IMR-90 (cell line): ENCODE measurements at regions of chr1 and their contacts with region 1.

Region 1: GRCh38 chr1:153922972-153923925 is at the start of gene GATAD2B:
- DNase-seq: peak; percentile 100
- ATAC-seq: peak; percentile 98
- H3K4me3 ChIP-seq: peak within 1 kb of the TSS; percentile 89
- H3K27ac ChIP-seq: peak within 1 kb of the TSS; percentile 83
- H3K4me1 ChIP-seq: peaks cover 11% of the 10 kb centered on the region
- H3K27me3 ChIP-seq: no peaks in the 10 kb centered on the region
- CTCF ChIP-seq: no peak
- POLR2A ChIP-seq: peak; percentile 53
- RAD21 ChIP-seq: no peak
- total RNA-seq, gene GATAD2B: 3.8 and 5.6 TPM in 2 replicates

Region 2: DNA sequence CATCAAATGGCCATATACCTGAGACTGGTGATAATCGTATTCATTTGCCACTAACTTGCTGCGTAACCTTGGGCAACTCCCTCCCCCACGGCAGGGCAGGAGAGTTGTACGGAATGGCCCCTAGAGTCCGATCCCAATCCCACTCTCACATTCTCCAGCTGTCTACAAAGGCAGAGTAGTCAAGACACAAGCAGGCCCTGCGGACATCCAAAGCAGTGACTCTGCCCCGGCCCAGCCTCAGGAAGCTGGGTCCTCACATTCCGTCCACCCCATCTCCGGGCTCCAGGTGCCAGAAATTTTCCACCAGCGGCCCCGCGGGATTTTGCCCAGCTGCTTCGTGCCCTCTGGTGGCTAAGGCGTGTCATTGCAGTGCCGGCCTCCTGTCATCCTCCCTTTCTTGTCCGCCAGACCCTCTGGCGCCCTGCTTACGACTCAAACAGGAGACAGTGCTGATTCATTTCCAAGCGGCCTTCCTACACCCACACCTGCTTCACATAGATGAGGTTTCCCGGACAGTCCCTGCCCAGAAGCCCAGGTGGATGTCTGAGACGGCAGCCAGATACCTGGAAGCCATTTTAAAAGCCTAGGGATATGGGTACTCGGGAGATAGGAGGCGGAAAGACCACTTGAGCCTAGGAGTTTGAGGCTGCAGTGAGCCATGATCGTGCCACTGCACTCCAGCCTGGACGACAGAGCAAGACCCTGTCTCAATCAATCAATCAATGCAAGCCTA is 354.7 kb before region 1 on chr1:
- CTCF ChIA-PET with region 1: no interaction called
- POLR2A ChIA-PET with region 1: no interaction called
- dilution Hi-C with region 1: no loop called
- in situ Hi-C with region 1: no loop called
- intact Hi-C with region 1: no loop called
- DNase-seq: peak; percentile 84
- ATAC-seq: peak; percentile 44
- H3K4me3 ChIP-seq: no peak overlapping the region
- H3K27ac ChIP-seq: peak overlapping the region; percentile 94
- H3K4me1 ChIP-seq: peaks cover 35% of the 10 kb centered on the region
- H3K27me3 ChIP-seq: no peaks in the 10 kb centered on the region
- CTCF ChIP-seq: peak; percentile 98
- POLR2A ChIP-seq: peak; percentile 68
- RAD21 ChIP-seq: peak; percentile 99

Region 3: DNA sequence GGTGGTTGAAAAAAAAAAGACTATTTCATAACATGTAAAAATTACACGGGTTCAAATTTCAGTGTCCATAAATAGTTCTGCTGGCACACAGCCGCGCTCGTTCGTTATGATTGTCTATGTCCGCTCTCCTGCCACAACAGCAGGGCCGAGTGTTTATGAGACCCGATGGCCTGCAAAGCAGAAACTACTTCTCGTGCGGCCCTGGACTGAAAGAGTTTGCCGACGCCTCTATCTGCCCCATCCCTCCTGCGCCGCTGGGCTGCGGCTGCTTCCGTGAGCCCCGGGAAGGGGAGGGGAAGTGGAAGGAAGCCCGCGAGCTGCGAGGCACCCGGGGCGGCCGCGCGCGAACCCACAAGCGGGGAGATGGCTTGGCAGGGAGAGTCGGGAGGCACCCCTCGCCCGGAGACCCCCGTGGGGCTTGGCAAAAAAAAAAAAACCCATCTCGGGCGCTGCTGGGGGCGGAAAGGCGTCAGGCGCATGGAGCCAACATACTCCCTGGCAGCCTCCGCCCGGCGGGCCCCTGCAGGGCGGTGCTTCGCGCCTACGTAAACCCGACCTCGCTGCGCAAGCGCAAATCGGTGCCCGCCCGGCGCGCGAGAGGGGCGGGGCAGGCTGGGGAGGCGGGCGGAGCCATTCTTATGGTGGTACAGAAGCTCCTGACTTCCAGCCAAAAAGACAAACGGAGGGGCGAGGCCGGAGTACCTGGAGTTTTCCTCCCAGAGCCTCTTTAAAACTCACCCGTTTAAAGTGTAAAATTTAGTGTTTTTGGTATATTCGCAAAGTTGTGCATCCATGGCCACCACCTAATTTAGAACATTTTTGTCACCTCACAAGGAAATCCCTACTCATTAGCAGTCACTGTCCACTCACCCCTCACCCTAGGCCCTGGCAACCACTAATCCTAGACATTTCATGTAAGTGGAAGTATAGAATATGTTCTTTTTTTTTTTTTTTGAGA is 139.7 kb before region 1 on chr1:
- CTCF ChIA-PET with region 1: no interaction called
- POLR2A ChIA-PET with region 1: interaction called, 14 read pairs
- dilution Hi-C with region 1: no loop called
- in situ Hi-C with region 1: no loop called
- intact Hi-C with region 1: no loop called
- DNase-seq: peak; percentile 86
- ATAC-seq: peak; percentile 99
- H3K4me3 ChIP-seq: peak overlapping the region; percentile 61
- H3K27ac ChIP-seq: peak overlapping the region; percentile 95
- H3K4me1 ChIP-seq: 0 out of 2 replicates have a peak, but pooled peaks cover 5% of the 10 kb centered on the region
- H3K27me3 ChIP-seq: no peaks in the 10 kb centered on the region
- CTCF ChIP-seq: no peak
- POLR2A ChIP-seq: peak; percentile 93
- RAD21 ChIP-seq: 0 out of 2 replicates have a peak, but pooled peaks have one; percentile 9

Region 4: GRCh38 chr1:153796791-153797659 is 126.2 kb before region 1 on chr1:
- CTCF ChIA-PET with region 1: no interaction called
- POLR2A ChIA-PET with region 1: no interaction called
- dilution Hi-C with region 1: loop called (anchors 25 kb)
- in situ Hi-C with region 1: no loop called
- intact Hi-C with region 1: loop called (anchors 10 kb)
- DNase-seq: peak; percentile 61
- ATAC-seq: peak; percentile 76
- H3K4me3 ChIP-seq: no peak overlapping the region
- H3K27ac ChIP-seq: no peak overlapping the region
- H3K4me1 ChIP-seq: no peaks in the 10 kb centered on the region
- H3K27me3 ChIP-seq: no peaks in the 10 kb centered on the region
- CTCF ChIP-seq: peak; percentile 79
- POLR2A ChIP-seq: no peak
- RAD21 ChIP-seq: peak; percentile 75

Region 5: DNA sequence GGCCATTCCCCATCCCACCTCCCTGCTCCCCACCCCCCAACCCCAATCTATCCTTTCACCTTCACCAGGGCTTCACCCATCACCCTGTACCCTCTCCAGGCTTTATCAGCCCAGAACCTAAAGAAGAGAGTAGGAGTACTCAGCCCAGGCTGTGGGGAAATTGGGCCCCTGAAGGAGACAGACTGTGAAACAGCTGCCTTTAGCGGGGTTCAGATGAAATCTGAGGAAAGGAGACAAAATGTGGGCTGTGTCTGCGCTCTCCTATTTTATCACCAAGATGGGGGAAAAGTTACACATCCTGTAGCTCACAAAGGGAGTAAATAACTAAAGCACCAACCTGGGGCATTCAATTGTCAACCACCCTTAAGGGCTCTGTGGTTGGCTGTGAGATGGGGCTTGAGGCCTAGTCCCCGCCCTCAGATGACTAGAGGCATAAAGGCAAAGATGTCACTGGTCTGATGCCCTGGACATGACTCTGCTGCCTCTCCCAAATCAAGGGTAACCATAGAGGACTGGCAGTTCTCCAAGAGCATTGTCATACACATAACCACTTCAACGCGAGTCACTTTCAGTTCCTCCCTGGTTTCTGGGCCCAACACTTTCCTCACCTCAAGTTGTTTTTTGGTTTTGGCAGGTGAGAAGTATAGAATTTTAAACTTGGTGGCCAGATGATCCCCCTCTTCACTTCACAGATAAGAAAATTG is 118.1 kb before region 1 on chr1:
- CTCF ChIA-PET with region 1: no interaction called
- POLR2A ChIA-PET with region 1: no interaction called
- dilution Hi-C with region 1: loop called (anchors 25 kb)
- in situ Hi-C with region 1: no loop called
- intact Hi-C with region 1: no loop called
- DNase-seq: peak; percentile 92
- ATAC-seq: peak; percentile 82
- H3K4me3 ChIP-seq: no peak overlapping the region
- H3K27ac ChIP-seq: no peak overlapping the region
- H3K4me1 ChIP-seq: 0 out of 2 replicates have a peak, but pooled peaks cover 3% of the 10 kb centered on the region
- H3K27me3 ChIP-seq: no peaks in the 10 kb centered on the region
- CTCF ChIP-seq: no peak
- POLR2A ChIP-seq: no peak
- RAD21 ChIP-seq: no peak

Region 6: GRCh38 chr1:153816283-153816889 is 106.9 kb before region 1 on chr1:
- CTCF ChIA-PET with region 1: no interaction called
- POLR2A ChIA-PET with region 1: no interaction called
- dilution Hi-C with region 1: loop called (anchors 25 kb)
- in situ Hi-C with region 1: no loop called
- intact Hi-C with region 1: loop called (anchors 2 kb)
- DNase-seq: no peak
- ATAC-seq: no peak
- H3K4me3 ChIP-seq: no peak overlapping the region
- H3K27ac ChIP-seq: no peak overlapping the region
- H3K4me1 ChIP-seq: no peaks in the 10 kb centered on the region
- H3K27me3 ChIP-seq: no peaks in the 10 kb centered on the region
- CTCF ChIP-seq: no peak
- POLR2A ChIP-seq: no peak
- RAD21 ChIP-seq: no peak

Region 7: DNA sequence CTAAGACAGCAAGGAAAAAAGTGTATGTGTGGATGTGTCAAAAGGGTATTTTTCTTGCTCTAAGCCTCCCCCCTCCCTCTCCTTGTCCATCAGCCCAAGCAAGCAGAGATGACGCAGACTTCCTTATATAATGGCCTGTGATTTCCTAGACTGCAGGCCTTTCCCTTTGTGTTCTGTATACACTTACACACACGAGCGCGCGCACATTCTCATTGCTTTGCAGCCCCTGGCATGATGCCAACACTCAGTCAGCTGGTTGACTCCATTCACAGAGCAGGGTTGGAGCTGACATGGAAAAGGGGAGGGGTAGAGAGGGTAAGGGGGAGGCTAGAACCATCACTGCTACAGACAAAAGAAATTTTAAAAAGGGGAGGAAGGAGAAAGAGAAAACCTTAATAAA is 42.3 kb before region 1 on chr1:
- CTCF ChIA-PET with region 1: no interaction called
- POLR2A ChIA-PET with region 1: no interaction called
- dilution Hi-C with region 1: no loop called
- in situ Hi-C with region 1: no loop called
- intact Hi-C with region 1: loop called (anchors 5 kb)
- DNase-seq: peak; percentile 98
- ATAC-seq: peak; percentile 97
- H3K4me3 ChIP-seq: peak overlapping the region; percentile 46; the same call in 1 of the 2 replicates
- H3K27ac ChIP-seq: no peak overlapping the region; the same call in 1 of the 2 replicates
- H3K4me1 ChIP-seq: peaks cover 6% of the 10 kb centered on the region
- H3K27me3 ChIP-seq: no peaks in the 10 kb centered on the region
- CTCF ChIP-seq: no peak
- POLR2A ChIP-seq: no peak
- RAD21 ChIP-seq: no peak

Region 8: GRCh38 chr1:153936011-153936802 is 13.0 kb after region 1 on chr1:
- CTCF ChIA-PET with region 1: no interaction called
- POLR2A ChIA-PET with region 1: no interaction called
- dilution Hi-C with region 1: no loop called
- in situ Hi-C with region 1: no loop called
- intact Hi-C with region 1: no loop called
- DNase-seq: no peak
- ATAC-seq: no peak
- H3K4me3 ChIP-seq: no peak overlapping the region
- H3K27ac ChIP-seq: no peak overlapping the region
- H3K4me1 ChIP-seq: no peaks in the 10 kb centered on the region
- H3K27me3 ChIP-seq: no peaks in the 10 kb centered on the region
- CTCF ChIP-seq: no peak
- POLR2A ChIP-seq: no peak
- RAD21 ChIP-seq: no peak